Esophagus squamous epithelium (tissue), 5 donors: ENCODE measurements at regions of chr16 and their contacts with region 1.

Region 1: DNA sequence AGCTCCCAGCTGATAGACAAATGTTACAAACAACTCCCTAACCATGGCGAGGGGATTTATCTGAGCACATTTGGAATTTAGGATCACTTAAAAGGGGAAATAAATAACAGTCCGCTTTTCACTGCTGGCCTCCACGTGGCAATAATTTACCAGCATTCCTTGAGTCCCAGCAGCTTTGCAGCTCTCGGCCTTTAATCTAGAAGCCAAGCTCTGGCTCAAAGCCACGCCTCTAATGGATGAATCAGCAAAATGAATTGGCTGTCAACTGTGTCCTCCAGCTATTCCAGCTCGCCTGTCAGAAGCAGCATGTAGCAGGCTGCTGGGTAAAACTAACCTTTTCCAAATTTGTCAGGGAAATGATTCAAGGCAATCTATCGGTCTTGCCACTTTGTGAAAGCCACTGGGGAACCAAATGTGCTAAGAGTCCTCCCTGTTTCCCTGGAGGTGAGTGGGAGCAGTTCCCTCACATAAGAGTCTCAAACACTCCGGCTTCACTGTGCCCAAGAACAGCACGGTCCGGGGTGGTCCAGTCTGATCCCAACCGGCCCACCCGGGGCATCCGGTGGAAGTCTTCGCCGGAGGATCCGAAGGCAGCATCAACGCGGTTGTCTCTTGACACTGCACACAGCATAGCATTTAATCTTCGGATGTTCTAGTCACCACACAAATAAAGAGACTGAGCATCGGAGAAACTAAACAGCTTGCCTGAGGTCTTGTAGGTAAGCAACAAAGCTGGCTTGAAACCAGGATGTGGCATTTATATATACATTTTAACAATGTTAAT is 143.3 kb downstream of the PARN start:
- DNase-seq: no peak
- H3K4me3 ChIP-seq: peak overlapping the region; percentile 9 to 52 (median 32)
- H3K27ac ChIP-seq: peak overlapping the region; percentile 66 to 83 (median 76)
- H3K4me1 ChIP-seq: peaks cover 9 to 36% (median 12%) of the 10 kb centered on the region in 3 donors
- H3K27me3 ChIP-seq: no peaks in the 10 kb centered on the region
- CTCF ChIP-seq: peak in 1 of 6 experiments; percentile 21
- POLR2A ChIP-seq: no peak

Region 2: GRCh38 chr16:14325502-14326401 is 161.0 kb before region 1 on chr16:
- intact Hi-C with region 1: no loop called
- DNase-seq: no peak
- H3K4me3 ChIP-seq: no peak overlapping the region
- H3K27ac ChIP-seq: peak overlapping the region in 1 of 4 donors; percentile 29
- H3K4me1 ChIP-seq: peaks cover 0 to 12% (median 0%) of the 10 kb centered on the region in 3 donors
- H3K27me3 ChIP-seq: no peaks in the 10 kb centered on the region
- CTCF ChIP-seq: no peak
- POLR2A ChIP-seq: no peak

Region 3: DNA sequence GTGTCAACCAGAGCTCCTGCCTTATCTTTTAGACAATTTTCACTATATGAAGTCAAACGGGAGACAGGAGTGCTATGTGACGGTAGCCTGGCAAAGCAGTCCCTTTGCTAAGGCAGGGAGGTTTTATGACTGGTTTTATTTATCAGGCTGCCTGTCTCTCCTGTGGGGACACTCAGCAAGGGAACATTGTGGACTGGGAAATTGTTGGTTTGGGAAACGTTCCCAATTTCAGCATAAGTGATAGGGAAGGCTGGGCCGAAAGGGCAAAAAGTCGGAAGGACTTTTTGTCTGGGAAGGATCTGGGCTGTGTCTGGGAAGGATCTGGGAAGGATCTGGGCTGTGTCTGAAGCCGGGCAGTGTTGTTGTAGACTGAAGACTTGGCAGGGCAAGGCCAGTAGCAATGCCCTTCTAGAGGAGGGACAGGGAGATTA is 67.9 kb before region 1 on chr16:
- intact Hi-C with region 1: loop called (anchors 10 kb)
- DNase-seq: no peak
- H3K4me3 ChIP-seq: no peak overlapping the region
- H3K27ac ChIP-seq: no peak overlapping the region
- H3K4me1 ChIP-seq: no peaks in the 10 kb centered on the region
- H3K27me3 ChIP-seq: no peaks in the 10 kb centered on the region
- CTCF ChIP-seq: no peak
- POLR2A ChIP-seq: no peak

Region 4: DNA sequence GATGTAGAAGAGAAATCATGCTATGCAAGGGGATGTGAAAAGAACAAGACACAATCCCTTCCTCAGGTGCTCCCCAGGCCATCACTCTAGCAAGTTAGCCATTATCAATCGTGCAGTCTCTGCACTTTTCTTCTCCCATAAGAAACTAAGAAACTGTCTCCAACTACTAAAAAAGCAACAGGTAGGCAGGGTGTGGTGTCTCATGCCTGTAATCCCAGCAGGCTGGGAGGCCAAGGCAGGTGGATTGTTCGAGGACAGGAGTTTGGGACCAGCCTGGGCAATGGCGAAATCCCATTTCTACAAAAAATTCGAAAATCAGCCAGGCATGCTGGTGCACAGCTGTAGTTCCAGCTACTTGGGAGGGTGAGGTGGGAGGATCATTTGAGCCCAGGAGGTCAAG is 129.6 kb after region 1 on chr16:
- intact Hi-C with region 1: no loop called
- DNase-seq: no peak
- H3K4me3 ChIP-seq: no peak overlapping the region
- H3K27ac ChIP-seq: no peak overlapping the region
- H3K4me1 ChIP-seq: no peaks in the 10 kb centered on the region
- H3K27me3 ChIP-seq: no peaks in the 10 kb centered on the region
- CTCF ChIP-seq: no peak
- POLR2A ChIP-seq: no peak